Thyroid gland (tissue), 4 donors: ENCODE measurements at regions of chr6 and their contacts with region 1.

Region 1: DNA sequence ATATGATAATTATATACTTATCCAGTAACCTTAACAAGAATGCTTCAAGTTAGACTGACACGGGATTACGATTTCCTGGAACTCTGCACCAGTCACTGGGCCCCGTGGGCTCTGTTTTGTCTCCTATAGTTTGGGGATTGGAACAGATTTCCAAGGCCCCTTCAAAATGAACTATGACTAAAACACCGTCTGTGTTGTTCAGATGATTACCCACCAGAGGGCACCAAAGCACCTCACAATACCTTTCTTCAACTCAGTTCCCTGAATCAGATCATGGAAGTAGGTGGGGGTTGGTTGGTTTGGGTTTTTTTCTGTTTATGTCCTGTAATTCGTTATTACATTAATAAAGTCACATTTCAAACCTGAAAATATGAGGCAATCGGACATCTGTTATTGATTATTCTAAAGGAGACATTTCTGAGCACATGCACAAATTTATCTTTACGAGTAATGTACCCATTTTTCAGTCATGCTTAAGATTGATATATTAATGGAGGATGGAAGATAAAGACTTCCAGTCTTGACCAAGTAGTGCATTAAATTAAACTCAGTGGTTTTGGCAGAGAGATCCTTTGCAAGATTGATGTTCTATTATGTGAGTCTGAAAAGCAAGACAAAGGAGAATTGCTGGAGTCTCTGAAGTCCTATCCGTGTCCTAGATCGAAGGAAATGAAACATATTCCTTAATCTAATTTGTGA is 112.0 kb upstream of the COL21A1 start:
- DNase-seq: peak; percentile 67 to 68
- H3K4me3 ChIP-seq: no peak overlapping the region
- H3K27ac ChIP-seq: no peak overlapping the region
- H3K4me1 ChIP-seq: no peaks in the 10 kb centered on the region
- H3K27me3 ChIP-seq: no peaks in the 10 kb centered on the region
- CTCF ChIP-seq: peak; percentile 52 to 95 (median 82)
- POLR2A ChIP-seq: no peak

Region 2: GRCh38 chr6:56193846-56194245 is 165.5 kb before region 1 on chr6:
- intact Hi-C with region 1: no loop called
- DNase-seq: no peak
- H3K4me3 ChIP-seq: no peak overlapping the region
- H3K27ac ChIP-seq: no peak overlapping the region
- H3K4me1 ChIP-seq: no peaks in the 10 kb centered on the region
- H3K27me3 ChIP-seq: no peaks in the 10 kb centered on the region
- CTCF ChIP-seq: no peak
- POLR2A ChIP-seq: no peak

Region 3: DNA sequence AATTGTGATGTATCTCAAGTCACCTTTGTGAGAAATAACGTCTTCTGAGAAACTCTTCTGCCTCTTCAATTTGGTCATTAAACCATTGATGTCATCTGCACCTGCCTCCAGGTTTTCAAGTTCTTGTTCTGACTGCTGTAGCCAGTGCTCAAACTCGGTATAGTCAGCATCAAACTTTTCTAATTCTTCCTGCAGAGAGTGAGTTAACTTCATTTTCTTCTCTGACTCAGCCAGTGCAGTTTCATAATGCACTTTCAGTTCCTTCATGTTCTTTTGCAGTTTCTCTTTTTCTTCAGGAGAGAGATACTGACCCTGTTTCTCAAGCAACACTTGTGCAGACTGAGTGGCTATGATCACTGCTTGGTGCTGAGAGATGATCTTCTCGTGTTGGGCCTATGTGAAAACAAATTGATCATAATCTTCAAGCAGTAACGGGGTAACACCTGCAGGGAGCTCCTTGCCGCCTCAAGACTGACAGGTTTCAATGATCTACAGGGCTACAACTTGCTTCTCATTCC is 234.5 kb after region 1 on chr6:
- intact Hi-C with region 1: loop called (anchors 5 kb)
- DNase-seq: no peak
- H3K4me3 ChIP-seq: no peak overlapping the region
- H3K27ac ChIP-seq: no peak overlapping the region
- H3K4me1 ChIP-seq: no peaks in the 10 kb centered on the region
- H3K27me3 ChIP-seq: no peaks in the 10 kb centered on the region
- CTCF ChIP-seq: no peak
- POLR2A ChIP-seq: no peak